ENCODE measurements at regions of chr1 and their contacts with region 1.

Region 1: GRCh38 chr1:244051053-244051444 is at the start of gene ZBTB18:
- DNase-seq: peak; percentile 75
- H3K4me3 ChIP-seq: peak within 1 kb of the TSS; percentile 77
- H3K27ac ChIP-seq: no peak within 1 kb of the TSS
- H3K27me3 ChIP-seq: no peaks in the 10 kb centered on the region
- CTCF ChIP-seq: no peak
- polyA plus RNA-seq, gene ZBTB18: 11.0 and 12.7 TPM in 2 replicates

Region 2: DNA sequence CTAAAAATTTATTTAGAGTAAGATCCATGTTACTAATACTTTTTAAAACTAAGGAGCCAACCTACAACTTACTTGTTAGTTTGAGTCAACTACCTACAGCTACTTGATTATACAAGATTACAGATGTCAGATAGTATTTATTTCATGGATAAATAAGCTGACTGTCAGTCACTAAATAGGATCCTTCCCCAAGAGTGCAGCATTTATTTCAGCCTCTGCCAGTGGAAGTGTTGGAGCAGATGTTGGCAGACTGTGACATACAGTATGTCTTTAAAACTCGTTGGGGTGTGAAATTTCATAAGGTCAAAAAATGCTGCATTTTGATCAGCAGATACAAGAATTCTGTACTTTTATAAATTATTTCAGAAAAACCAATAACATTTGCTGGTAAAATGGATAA is 357.2 kb before region 1 on chr1:
- CTCF ChIA-PET with region 1: no interaction called
- POLR2A ChIA-PET with region 1: no interaction called
- DNase-seq: no peak
- H3K4me3 ChIP-seq: no peak overlapping the region
- H3K27ac ChIP-seq: no peak overlapping the region
- H3K27me3 ChIP-seq: no peaks in the 10 kb centered on the region
- CTCF ChIP-seq: no peak

Region 3: DNA sequence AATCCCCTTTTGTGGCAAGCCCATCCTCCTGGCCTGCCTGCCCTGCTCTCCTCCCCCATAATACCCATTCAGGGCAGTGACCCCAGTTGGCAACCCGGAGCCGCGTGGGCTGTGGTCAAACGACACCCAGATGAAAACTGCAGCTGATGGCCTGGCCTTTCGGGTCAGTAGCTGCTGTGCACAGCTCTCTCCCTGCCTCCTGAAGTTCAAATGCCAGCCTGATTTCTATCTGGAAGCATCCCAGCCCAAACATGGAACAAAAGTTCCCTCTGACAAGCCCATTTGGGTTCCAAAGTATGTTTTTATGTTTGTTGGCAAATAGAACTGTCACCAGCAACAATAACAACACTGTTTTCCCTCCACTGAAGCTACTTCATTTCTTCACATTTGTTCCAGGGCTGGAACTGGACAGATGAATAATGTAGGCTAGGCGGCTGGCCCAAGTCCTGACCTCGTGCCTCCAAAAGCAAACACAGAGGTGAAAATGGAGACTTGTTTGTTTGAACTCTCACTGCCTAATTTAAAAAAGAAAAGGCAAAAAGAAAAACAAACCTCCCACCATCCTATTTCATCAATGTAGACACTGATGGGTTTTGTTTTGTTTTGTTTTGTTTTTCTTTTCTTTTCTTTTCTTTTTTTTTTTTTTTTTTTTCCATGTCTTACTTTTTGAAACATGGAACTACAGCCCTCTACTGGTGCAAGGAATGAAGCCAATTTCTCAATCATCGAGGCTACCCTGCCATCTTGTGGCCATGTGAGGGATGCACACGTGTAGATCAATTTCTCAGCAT is 221.6 kb after region 1 on chr1:
- CTCF ChIA-PET with region 1: interaction called, 18 read pairs
- POLR2A ChIA-PET with region 1: interaction called, 3 read pairs
- DNase-seq: peak; percentile 88
- H3K4me3 ChIP-seq: no peak overlapping the region
- H3K27ac ChIP-seq: no peak overlapping the region
- H3K27me3 ChIP-seq: no peaks in the 10 kb centered on the region
- CTCF ChIP-seq: peak; percentile 98

Region 4: DNA sequence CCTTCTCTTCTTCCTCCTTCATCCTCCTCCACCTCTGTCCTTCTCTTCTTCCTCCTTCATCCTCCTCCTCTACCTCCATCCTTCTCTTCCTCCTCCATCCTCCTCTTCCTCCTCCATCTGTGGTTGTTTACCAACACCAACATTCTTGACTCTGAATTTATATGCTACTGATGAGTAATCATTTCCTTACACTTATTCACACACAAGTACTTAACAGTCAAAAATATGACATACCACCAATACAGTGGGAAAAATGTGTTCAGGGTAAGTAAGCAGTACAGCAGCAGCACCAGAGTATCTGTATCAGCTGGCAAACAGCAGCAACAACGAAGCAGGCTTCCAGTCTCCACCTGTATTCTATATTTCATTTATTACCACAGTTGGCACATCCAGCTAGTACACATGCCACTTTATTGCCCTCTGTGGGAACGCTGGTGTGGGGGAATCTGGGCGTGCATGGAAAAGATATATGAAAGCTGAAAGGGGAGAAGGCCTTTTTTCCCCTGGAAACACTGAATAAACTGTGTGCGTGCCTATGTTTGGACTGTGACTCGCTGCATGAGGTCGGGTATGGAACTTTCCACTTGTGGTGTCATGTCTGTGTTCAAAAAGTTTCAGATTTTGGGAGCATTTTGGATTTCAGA is 384.6 kb after region 1 on chr1:
- CTCF ChIA-PET with region 1: no interaction called
- POLR2A ChIA-PET with region 1: no interaction called
- DNase-seq: no peak
- H3K4me3 ChIP-seq: no peak overlapping the region
- H3K27ac ChIP-seq: peak overlapping the region; percentile 79
- H3K27me3 ChIP-seq: no peaks in the 10 kb centered on the region
- CTCF ChIP-seq: no peak

Region 5: GRCh38 chr1:244583358-244583982 is 532.4 kb after region 1 on chr1:
- CTCF ChIA-PET with region 1: no interaction called
- POLR2A ChIA-PET with region 1: no interaction called
- DNase-seq: no peak
- H3K4me3 ChIP-seq: no peak overlapping the region
- H3K27ac ChIP-seq: no peak overlapping the region
- H3K27me3 ChIP-seq: no peaks in the 10 kb centered on the region
- CTCF ChIP-seq: no peak

Measured in AG04450 (cell line).